GM12878 (cell line): ENCODE measurements at regions of chr6 and their contacts with region 1.

Region 1: DNA sequence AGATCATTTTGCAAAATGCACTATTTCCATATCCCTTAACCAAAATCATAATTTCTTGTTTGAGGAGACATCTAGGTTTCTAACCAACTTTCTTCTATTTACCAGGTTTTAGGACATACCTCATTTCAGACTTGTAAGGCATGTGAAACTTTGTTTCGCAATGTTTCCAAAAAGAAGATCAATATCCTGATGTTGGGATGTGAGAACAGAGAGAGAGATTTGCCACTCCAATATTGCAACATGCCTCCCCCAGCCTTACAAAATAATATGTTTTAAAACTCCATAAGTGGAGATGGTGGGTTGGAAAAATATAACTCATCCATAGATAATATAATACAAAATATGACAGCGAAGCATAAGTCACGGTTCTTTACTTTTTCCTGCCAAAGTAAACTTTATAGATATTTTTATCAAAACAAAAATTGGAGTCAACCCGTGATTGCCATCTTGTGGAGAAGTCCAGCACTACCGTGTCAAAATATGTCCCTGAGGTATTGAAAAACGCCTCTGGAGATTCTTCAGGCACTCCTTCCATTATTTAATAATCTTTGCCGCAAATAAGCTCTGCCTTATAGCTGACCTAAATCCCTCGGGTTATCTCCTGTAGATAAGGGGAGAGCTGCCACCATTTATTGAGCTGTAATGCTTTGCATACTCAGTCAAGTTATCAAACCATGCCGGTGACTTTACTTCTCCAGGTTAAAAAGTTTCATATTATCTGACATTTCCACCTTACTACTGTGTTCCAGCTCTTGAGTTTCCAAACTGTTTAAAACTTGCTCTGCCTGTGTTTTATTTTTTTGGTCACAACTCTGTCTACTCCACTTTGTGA is 534.2 kb downstream of the HACE1 start:
- DNase-seq: no peak
- ATAC-seq: peak; percentile 52
- H3K4me3 ChIP-seq: no peak overlapping the region
- H3K27ac ChIP-seq: no peak overlapping the region
- H3K4me1 ChIP-seq: no peaks in the 10 kb centered on the region
- H3K27me3 ChIP-seq: no peaks in the 10 kb centered on the region; a peak in 1 of 4 replicates
- CTCF ChIP-seq: peak; percentile 41 to 55 (median 48)
- EP300 ChIP-seq: no peak
- POLR2A ChIP-seq: no peak
- RAD21 ChIP-seq: peak; percentile 47

Region 2: DNA sequence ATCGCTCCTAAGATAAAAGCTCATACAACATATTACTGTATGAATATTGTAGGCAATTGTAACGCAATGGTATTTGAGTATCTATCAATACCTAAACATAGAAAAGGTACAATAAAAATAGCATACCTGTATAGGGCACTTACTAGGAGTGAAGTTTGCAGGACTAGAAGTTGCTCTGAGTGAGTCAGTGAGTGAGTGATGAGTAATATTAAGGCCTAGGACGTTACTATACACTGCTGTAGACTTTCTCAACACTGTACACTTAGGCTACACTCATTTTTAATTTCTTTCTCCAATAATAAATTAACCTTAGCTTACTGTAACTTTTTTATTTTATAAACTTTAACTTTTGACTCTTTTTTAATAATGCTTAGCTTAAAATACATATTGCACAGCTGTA is 12.7 kb before region 1 on chr6:
- CTCF ChIA-PET with region 1: interaction called, 13 read pairs
- POLR2A ChIA-PET with region 1: no interaction called
- RAD21 ChIA-PET with region 1: no interaction called
- SMC1A ChIA-PET with region 1: interaction called, 4 read pairs
- in situ Hi-C with region 1: no loop called
- intact Hi-C with region 1: no loop called
- DNase-seq: no peak
- ATAC-seq: no peak
- H3K4me3 ChIP-seq: no peak overlapping the region
- H3K27ac ChIP-seq: no peak overlapping the region
- H3K4me1 ChIP-seq: no peaks in the 10 kb centered on the region
- H3K27me3 ChIP-seq: no peaks in the 10 kb centered on the region
- CTCF ChIP-seq: no peak
- EP300 ChIP-seq: no peak
- POLR2A ChIP-seq: no peak
- RAD21 ChIP-seq: no peak